ENCODE measurements at regions of chr4 and their contacts with region 1.

Region 1: DNA sequence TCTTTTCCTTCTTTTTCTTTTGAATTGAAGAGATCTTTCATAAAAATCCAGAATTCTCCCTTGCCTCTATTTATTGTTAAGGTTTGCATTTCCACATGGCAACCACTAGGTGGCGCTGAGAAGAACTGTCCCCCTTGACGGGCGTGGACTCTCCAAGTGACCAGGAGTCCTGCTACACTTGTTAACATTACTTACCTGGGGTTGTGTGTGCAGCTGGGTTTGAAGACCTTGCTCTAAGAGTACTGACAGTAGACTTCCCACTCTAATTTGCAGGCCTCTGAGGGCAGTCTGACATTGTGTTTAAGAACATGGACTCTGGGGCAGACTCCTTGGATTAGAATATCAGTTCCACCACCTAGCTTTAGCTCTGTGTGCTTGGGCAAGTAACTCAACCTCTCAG is 52.8 kb downstream of the GPRIN3 start:
- DNase-seq: peak; percentile 47
- H3K4me3 Mint-ChIP-seq: no peak overlapping the region
- H3K27ac Mint-ChIP-seq: no peak overlapping the region
- H3K4me1 Mint-ChIP-seq: peaks cover 55% of the 10 kb centered on the region
- H3K27me3 Mint-ChIP-seq: no peaks in the 10 kb centered on the region

Region 2: GRCh38 chr4:89213062-89213701 is 41.7 kb before region 1 on chr4:
- CTCF ChIA-PET with region 1: no interaction called
- intact Hi-C with region 1: no loop called
- DNase-seq: no peak
- H3K4me3 Mint-ChIP-seq: no peak overlapping the region
- H3K27ac Mint-ChIP-seq: no peak overlapping the region
- H3K4me1 Mint-ChIP-seq: no peaks in the 10 kb centered on the region
- H3K27me3 Mint-ChIP-seq: peaks cover 6% of the 10 kb centered on the region

Region 3: DNA sequence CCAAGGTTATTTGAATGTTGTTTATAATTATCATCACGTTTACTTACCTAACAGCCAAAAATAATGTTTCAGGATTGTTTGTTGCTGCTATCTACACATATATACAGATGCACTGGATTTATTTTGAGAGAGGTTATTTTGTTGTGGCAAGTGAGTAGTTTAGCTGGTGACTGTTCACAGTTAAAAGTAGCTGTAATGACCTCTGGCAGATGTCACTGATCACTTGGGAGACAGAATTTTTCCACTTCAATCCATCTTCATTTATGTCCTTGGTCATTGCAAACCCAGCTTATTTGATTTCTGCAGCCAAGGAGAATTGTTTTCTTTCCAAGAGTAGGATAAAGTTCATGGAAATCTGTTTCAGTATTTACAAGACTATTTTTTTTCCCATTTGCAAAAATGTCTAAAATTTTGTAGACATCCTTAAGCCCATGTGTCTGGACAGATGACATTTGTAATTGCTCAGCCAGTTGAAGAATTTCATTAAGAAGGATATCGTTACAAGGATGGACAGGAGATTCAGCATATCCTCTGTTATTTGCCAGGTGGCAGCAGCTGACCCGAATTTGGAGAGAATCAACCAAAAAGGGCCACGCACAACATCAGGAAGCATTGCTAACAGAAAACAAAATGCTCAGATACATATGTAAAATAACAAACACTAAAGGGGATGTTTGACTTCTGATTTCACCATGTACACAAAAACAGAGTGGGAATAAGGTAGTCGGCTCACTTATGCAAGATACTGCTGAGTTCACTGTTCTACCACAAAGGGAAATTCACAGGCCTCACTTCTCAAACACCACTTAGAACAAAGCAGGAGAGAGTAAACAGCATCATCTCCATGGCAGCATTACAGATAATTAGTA is 11.7 kb before region 1 on chr4:
- CTCF ChIA-PET with region 1: interaction called, 13 read pairs
- intact Hi-C with region 1: no loop called
- DNase-seq: peak; percentile 12
- H3K4me3 Mint-ChIP-seq: no peak overlapping the region
- H3K27ac Mint-ChIP-seq: peak overlapping the region; percentile 24
- H3K4me1 Mint-ChIP-seq: peaks cover 24% of the 10 kb centered on the region
- H3K27me3 Mint-ChIP-seq: no peaks in the 10 kb centered on the region

Region 4: DNA sequence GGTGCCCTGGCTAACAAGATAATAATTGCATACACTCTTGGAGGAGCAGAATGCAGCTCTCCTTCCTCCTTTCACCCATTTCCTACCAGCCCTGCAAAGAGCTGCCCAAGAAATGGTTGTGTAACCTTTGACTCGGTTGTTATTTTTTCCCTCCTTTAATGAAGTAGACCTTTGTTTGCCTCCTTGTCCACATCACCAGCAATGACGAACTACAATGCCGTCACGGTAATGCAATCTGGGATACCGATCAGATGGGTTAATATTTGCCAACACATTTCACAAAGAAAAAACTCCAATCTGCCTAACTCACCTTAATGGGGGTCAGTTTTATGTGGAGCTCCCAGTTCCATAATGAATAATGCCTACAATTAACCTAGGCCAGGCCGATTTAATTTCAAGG is 20.7 kb after region 1 on chr4:
- CTCF ChIA-PET with region 1: interaction called, 10 read pairs
- intact Hi-C with region 1: no loop called
- DNase-seq: no peak
- H3K4me3 Mint-ChIP-seq: no peak overlapping the region
- H3K27ac Mint-ChIP-seq: no peak overlapping the region
- H3K4me1 Mint-ChIP-seq: peaks cover 33% of the 10 kb centered on the region
- H3K27me3 Mint-ChIP-seq: no peaks in the 10 kb centered on the region

Region 5: DNA sequence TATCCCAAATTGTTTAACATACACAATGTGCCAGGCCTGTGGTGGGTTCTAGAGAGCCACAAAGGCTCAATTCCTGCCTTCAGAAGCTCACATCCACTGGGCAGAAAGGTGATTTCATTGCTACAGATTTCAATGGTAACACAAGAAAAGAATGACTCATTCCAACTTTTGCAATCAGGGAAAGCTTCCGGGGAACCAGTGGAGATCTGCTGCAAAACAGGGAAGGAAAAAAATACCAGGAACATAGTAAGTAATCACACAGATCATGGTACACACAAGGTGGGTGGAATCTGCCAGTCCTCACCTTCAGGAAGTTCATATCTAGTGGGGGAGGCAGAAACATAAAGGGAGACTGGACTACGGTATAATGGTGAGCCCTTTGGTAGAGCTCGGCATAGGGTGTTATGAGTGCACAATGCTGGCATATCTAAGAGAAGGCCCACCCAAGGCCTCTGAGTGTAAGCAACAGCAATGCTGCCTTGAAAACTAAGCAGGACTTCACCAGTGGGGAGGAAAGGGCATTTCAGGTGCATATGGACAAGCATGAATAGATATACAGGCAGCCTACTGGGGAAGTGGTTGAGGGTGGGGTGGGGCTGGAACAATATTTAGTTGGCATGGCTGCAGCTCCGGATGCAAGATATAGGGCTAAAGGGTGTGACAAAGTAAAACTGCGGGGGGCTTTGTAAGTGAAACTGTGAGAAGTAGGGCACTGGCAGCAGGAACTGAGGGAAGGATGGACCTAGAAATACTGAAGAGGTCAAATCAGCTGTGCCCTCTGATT is 28.6 kb after region 1 on chr4:
- CTCF ChIA-PET with region 1: interaction called, 26 read pairs
- intact Hi-C with region 1: loop called (anchors 2 kb)
- DNase-seq: no peak
- H3K4me3 Mint-ChIP-seq: no peak overlapping the region
- H3K27ac Mint-ChIP-seq: peak overlapping the region; percentile 28
- H3K4me1 Mint-ChIP-seq: peaks cover 66% of the 10 kb centered on the region
- H3K27me3 Mint-ChIP-seq: no peaks in the 10 kb centered on the region

Region 6: GRCh38 chr4:89289312-89289711 is 34.5 kb after region 1 on chr4:
- CTCF ChIA-PET with region 1: interaction called, 26 read pairs
- intact Hi-C with region 1: loop called (anchors 1 kb)
- DNase-seq: no peak
- H3K4me3 Mint-ChIP-seq: peak overlapping the region; percentile 56
- H3K27ac Mint-ChIP-seq: peak overlapping the region; percentile 77
- H3K4me1 Mint-ChIP-seq: peaks cover 93% of the 10 kb centered on the region
- H3K27me3 Mint-ChIP-seq: no peaks in the 10 kb centered on the region

Region 7: DNA sequence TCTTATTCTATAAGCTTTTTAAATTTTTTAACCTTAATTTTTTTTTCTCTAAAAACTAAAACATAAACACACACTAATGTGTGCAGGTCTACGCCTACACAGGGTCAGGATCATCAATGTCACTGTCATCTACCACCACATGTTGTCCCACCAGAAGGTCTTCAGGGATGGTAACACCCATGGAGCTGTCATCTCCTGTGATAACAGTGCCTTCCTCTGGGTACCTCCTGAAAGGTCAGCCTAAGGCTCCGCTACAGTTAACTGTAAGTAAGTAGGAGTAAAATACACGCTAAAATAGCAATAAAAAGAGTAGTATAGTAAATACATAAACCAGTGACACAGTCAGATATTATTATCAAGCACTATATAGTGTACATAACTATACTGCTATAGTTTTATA is 98.7 kb after region 1 on chr4:
- CTCF ChIA-PET with region 1: interaction called, 4 read pairs
- intact Hi-C with region 1: loop called (anchors 2 kb)
- DNase-seq: no peak
- H3K4me3 Mint-ChIP-seq: no peak overlapping the region
- H3K27ac Mint-ChIP-seq: no peak overlapping the region
- H3K4me1 Mint-ChIP-seq: no peaks in the 10 kb centered on the region
- H3K27me3 Mint-ChIP-seq: no peaks in the 10 kb centered on the region